Activated CD4-positive, alpha-beta T cell treated with anti-CD3 and anti-CD28 coated beads, Interleukin-2, amount 10 ng/mL, durations not matched to agents 24 days and 14 days (primary cell): ENCODE measurements at regions of chr6 and their contacts with region 1.

Region 1: GRCh38 chr6:138115877-138116660 is 8.8 kb upstream of the PERP start:
- DNase-seq: peak; percentile 81
- H3K4me3 Mint-ChIP-seq: no peak overlapping the region
- H3K27ac Mint-ChIP-seq: no peak overlapping the region
- H3K4me1 Mint-ChIP-seq: peaks cover 7% of the 10 kb centered on the region
- H3K27me3 Mint-ChIP-seq: peaks cover 44% of the 10 kb centered on the region

Region 2: GRCh38 chr6:138287144-138287955 is 171.3 kb after region 1 on chr6:
- intact Hi-C with region 1: loop called (anchors 1 kb)
- DNase-seq: peak; percentile 82
- H3K4me3 Mint-ChIP-seq: no peak overlapping the region
- H3K27ac Mint-ChIP-seq: no peak overlapping the region
- H3K4me1 Mint-ChIP-seq: peaks cover 2% of the 10 kb centered on the region
- H3K27me3 Mint-ChIP-seq: no peaks in the 10 kb centered on the region

Region 3: DNA sequence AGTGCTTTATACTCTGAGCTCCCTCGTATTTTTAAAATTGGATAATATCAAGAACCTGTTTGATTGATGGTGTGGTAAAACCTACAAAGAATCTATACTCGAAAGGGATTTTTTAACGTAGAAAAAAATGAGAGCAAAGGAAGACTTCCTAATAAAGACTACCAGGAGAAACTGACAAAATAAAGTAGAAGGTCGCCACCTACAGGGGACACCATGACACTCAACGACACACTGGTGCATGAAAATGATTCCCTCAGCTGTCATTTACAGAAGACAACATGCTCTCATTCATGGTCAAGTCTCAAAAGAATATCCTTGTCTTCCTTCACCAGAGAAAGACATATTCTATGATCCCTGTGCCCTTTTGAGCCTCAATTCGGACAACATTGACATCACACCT is 393.3 kb after region 1 on chr6:
- intact Hi-C with region 1: loop called (anchors 2 kb)
- DNase-seq: peak; percentile 83
- H3K4me3 Mint-ChIP-seq: no peak overlapping the region
- H3K27ac Mint-ChIP-seq: no peak overlapping the region
- H3K4me1 Mint-ChIP-seq: peaks cover 1% of the 10 kb centered on the region
- H3K27me3 Mint-ChIP-seq: peaks cover 23% of the 10 kb centered on the region

Region 4: GRCh38 chr6:138517635-138518034 is 401.6 kb after region 1 on chr6:
- intact Hi-C with region 1: loop called (anchors 1 kb)
- DNase-seq: peak; percentile 88
- H3K4me3 Mint-ChIP-seq: no peak overlapping the region
- H3K27ac Mint-ChIP-seq: no peak overlapping the region
- H3K4me1 Mint-ChIP-seq: peaks cover 19% of the 10 kb centered on the region
- H3K27me3 Mint-ChIP-seq: peaks cover 5% of the 10 kb centered on the region

Region 5: DNA sequence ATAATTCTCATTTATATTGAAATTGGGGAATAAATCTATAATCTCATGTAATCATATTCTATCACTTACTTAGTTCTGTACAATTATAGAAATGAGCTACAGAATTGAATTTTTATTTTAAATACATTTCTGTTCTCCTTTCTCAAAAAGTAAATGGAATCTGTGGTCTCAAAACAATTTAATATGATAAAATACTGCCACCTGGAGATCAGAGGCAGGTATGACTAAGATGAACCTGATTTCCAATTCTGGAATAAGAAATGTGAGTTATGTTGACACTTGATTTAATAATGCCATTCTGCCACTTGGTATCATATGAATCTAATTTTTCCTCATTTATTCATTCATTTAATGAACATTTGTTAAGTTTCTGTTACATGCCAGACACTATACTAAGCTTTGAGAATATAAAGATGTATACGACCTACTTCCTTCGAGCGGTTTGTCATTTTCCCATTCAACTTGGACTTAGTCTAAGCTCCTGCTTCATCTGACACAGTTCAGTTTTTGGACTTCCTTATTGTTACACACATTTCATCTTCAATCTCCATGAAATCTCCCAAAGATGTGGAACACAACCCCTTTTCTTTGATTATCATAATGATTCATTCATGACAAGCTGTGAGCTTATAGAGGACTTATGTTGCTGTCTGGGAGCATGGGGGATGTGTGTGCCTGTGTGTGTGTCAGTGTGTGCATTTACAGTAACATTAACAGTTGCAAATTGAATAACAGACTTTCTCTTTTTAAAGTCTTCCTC is 650.0 kb after region 1 on chr6:
- intact Hi-C with region 1: loop called (anchors 5 kb)
- DNase-seq: no peak
- H3K4me3 Mint-ChIP-seq: no peak overlapping the region
- H3K27ac Mint-ChIP-seq: no peak overlapping the region
- H3K4me1 Mint-ChIP-seq: peaks cover 9% of the 10 kb centered on the region
- H3K27me3 Mint-ChIP-seq: no peaks in the 10 kb centered on the region